Caco-2 (cell line): ENCODE measurements at regions of chr1 and their contacts with region 1.

Region 1: GRCh38 chr1:242017584-242018233 is 18.8 kb upstream of the MAP1LC3C start:
- DNase-seq: peak; percentile 57 to 65
- H3K4me3 ChIP-seq: no peak overlapping the region
- H3K4me3 Mint-ChIP-seq: no peak overlapping the region
- H3K27ac Mint-ChIP-seq: no peak overlapping the region
- H3K4me1 ChIP-seq: no peaks in the 10 kb centered on the region
- H3K4me1 Mint-ChIP-seq: no peaks in the 10 kb centered on the region
- H3K27me3 ChIP-seq: no peaks in the 10 kb centered on the region; the same call in 1 of the 2 replicates
- H3K27me3 Mint-ChIP-seq: no peaks in the 10 kb centered on the region
- CTCF ChIP-seq: peak; percentile 69 to 70

Region 2: GRCh38 chr1:241531195-241532161 is 486.2 kb before region 1 on chr1:
- CTCF ChIA-PET with region 1: no interaction called
- POLR2A ChIA-PET with region 1: no interaction called
- intact Hi-C with region 1: loop called (anchors 1 kb)
- DNase-seq: peak in 1 of 2 experiments; percentile 36
- H3K4me3 ChIP-seq: peak overlapping the region; percentile 41
- H3K4me3 Mint-ChIP-seq: peak overlapping the region; percentile 86
- H3K27ac Mint-ChIP-seq: peak overlapping the region; percentile 31
- H3K4me1 ChIP-seq: no peaks in the 10 kb centered on the region
- H3K4me1 Mint-ChIP-seq: peaks cover 13% of the 10 kb centered on the region
- H3K27me3 ChIP-seq: no peaks in the 10 kb centered on the region
- H3K27me3 Mint-ChIP-seq: peaks cover 13% of the 10 kb centered on the region
- CTCF ChIP-seq: peak; percentile 26 to 49

Region 3: DNA sequence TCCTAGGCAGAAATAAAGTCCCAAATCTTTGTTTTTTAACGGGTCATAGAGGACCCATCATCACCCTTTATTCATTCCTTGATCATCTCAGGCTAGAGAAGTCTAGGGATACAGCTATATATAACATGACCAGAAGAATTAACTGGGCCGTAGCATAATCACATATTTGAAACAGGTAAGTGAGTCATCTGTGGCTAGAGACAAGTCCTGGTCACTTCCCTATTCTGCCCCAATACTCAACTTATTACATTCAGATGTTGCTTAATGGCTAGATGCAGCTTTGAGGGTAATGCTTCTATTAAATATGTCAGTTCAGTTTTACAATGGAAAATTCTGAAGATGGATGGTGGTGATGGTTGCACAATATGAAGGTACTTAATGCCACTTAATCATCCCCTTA is 122.7 kb before region 1 on chr1:
- CTCF ChIA-PET with region 1: no interaction called
- POLR2A ChIA-PET with region 1: no interaction called
- intact Hi-C with region 1: loop called (anchors 1 kb)
- DNase-seq: no peak
- H3K4me3 ChIP-seq: no peak overlapping the region
- H3K4me3 Mint-ChIP-seq: no peak overlapping the region
- H3K27ac Mint-ChIP-seq: no peak overlapping the region
- H3K4me1 ChIP-seq: peaks cover 4% of the 10 kb centered on the region; the same call in 1 of the 2 replicates
- H3K4me1 Mint-ChIP-seq: no peaks in the 10 kb centered on the region
- H3K27me3 ChIP-seq: no peaks in the 10 kb centered on the region
- H3K27me3 Mint-ChIP-seq: no peaks in the 10 kb centered on the region
- CTCF ChIP-seq: no peak

Region 4: GRCh38 chr1:241998412-241998921 is 19.2 kb before region 1 on chr1:
- CTCF ChIA-PET with region 1: interaction called, 11 read pairs
- POLR2A ChIA-PET with region 1: no interaction called
- intact Hi-C with region 1: no loop called
- DNase-seq: peak; percentile 48 to 66
- H3K4me3 ChIP-seq: no peak overlapping the region
- H3K4me3 Mint-ChIP-seq: no peak overlapping the region
- H3K27ac Mint-ChIP-seq: peak overlapping the region; percentile 50
- H3K4me1 ChIP-seq: peaks cover 15% of the 10 kb centered on the region
- H3K4me1 Mint-ChIP-seq: peaks cover 11% of the 10 kb centered on the region
- H3K27me3 ChIP-seq: no peaks in the 10 kb centered on the region
- H3K27me3 Mint-ChIP-seq: no peaks in the 10 kb centered on the region
- CTCF ChIP-seq: peak; percentile 12 to 18

Region 5: GRCh38 chr1:242033447-242033846 is 15.7 kb after region 1 on chr1:
- CTCF ChIA-PET with region 1: no interaction called
- POLR2A ChIA-PET with region 1: no interaction called
- intact Hi-C with region 1: no loop called
- DNase-seq: peak in 1 of 2 experiments; percentile 9
- H3K4me3 ChIP-seq: no peak overlapping the region
- H3K4me3 Mint-ChIP-seq: no peak overlapping the region
- H3K27ac Mint-ChIP-seq: no peak overlapping the region
- H3K4me1 ChIP-seq: no peaks in the 10 kb centered on the region
- H3K4me1 Mint-ChIP-seq: no peaks in the 10 kb centered on the region
- H3K27me3 ChIP-seq: no peaks in the 10 kb centered on the region
- H3K27me3 Mint-ChIP-seq: no peaks in the 10 kb centered on the region
- CTCF ChIP-seq: no peak

Region 6: DNA sequence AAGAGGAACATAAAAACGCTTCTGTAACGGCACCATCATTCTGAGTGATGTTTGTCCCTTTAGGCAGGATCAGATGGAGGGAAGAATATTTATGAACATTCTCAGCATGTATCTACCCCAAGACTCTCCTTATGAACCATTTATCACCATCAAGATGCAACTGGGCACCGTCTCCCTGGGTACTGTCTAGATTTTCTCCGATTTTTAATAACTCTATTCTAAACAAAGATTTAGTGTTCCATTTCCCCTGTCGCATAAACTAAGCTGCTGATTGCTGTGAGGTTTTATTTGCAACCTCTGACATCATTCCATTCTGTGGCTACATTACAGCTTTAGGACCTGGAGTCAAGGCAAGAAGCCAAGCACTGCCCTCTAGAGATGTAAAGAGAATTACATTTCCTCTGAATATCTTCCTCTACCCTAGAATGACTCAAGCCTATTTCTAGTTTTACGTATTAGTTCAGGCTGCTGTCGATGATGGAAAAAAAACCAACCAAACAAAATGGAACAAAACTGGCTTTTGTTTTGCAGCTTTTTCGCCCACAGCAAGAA is 111.3 kb after region 1 on chr1:
- CTCF ChIA-PET with region 1: no interaction called
- POLR2A ChIA-PET with region 1: no interaction called
- intact Hi-C with region 1: loop called (anchors 5 kb)
- DNase-seq: no peak
- H3K4me3 ChIP-seq: no peak overlapping the region
- H3K4me3 Mint-ChIP-seq: no peak overlapping the region
- H3K27ac Mint-ChIP-seq: no peak overlapping the region
- H3K4me1 ChIP-seq: no peaks in the 10 kb centered on the region
- H3K4me1 Mint-ChIP-seq: no peaks in the 10 kb centered on the region
- H3K27me3 ChIP-seq: no peaks in the 10 kb centered on the region
- H3K27me3 Mint-ChIP-seq: no peaks in the 10 kb centered on the region
- CTCF ChIP-seq: no peak

Region 7: DNA sequence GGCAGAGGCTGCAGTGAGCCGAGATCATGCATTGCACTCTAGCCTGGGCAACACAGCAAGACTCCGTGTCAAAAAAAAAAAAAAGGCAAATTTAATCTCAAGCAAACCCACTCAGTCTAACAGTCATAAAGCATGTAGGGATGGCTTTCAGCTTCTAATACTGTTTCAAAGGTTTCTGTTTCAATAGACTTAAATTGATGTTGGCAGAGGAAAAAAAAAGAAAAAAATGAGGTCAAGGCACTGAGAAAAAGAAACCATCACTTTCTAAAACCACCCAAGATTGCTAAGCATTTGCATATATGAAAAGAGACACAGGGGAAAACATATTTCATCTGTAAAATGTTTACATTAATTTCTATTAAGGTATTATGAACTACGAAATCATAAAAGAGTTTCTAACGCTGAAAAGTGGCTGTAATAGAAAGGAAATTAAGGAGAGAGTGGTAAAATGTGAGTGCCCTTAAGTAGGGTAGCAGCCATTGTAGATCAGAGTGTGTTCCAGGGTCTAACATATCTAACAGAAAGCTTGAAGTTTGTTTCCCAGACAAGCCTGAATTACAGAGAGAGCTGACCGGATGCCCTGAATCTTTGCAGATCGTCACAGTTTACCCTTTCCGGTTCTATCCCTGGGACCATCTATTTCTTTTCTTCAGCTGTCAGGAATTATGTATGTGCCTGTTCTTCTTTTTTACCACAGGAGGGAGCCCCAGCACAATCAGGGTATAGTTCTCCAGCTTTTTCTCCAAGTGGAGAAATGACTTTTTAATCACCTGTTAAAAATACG is 436.7 kb after region 1 on chr1:
- CTCF ChIA-PET with region 1: no interaction called
- POLR2A ChIA-PET with region 1: no interaction called
- intact Hi-C with region 1: loop called (anchors 10 kb)
- DNase-seq: peak in 1 of 2 experiments; percentile 26
- H3K4me3 ChIP-seq: no peak overlapping the region
- H3K4me3 Mint-ChIP-seq: no peak overlapping the region
- H3K27ac Mint-ChIP-seq: no peak overlapping the region
- H3K4me1 ChIP-seq: no peaks in the 10 kb centered on the region
- H3K4me1 Mint-ChIP-seq: no peaks in the 10 kb centered on the region
- H3K27me3 ChIP-seq: no peaks in the 10 kb centered on the region
- H3K27me3 Mint-ChIP-seq: no peaks in the 10 kb centered on the region
- CTCF ChIP-seq: peak; percentile 54 to 64